Right ventricle myocardium superior (tissue), 1 donor: ENCODE measurements at regions of chr1 and their contacts with region 1.

Region 1: DNA sequence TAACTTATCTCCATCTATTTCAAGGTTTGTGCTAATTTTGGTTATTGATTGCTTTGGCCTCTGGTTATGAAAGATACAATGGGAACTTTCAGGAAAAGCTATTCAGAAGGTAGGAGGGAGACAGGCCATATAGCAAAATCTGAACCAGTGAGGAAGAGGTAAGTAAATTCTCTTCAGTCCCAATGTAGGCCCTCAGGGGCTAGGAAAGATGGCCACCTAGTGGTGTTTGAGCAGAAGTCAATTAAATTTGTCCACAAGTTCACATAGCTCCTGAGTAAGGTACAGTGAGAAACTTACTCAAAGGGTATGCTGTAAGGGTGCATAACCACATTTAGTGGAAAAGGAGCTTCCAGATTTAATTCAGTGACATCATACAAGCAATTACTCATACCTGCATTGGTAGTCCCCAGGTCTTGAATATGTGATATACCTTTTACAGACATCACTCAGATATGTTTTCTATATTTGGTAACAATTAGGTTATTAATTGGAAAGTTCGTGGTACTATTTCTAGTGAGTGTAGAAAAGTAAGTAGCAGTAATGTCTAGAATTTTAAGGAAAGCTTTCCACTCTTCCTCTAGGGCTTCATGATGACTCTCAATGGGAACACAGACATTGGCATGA is 21.4 kb upstream of the FMO1 start:
- DNase-seq: no peak
- ATAC-seq: peak; percentile 84

Region 2: GRCh38 chr1:170967042-170967910 is 259.6 kb before region 1 on chr1:
- intact Hi-C with region 1: loop called (anchors 2 kb)
- DNase-seq: no peak
- ATAC-seq: peak; percentile 80

Region 3: DNA sequence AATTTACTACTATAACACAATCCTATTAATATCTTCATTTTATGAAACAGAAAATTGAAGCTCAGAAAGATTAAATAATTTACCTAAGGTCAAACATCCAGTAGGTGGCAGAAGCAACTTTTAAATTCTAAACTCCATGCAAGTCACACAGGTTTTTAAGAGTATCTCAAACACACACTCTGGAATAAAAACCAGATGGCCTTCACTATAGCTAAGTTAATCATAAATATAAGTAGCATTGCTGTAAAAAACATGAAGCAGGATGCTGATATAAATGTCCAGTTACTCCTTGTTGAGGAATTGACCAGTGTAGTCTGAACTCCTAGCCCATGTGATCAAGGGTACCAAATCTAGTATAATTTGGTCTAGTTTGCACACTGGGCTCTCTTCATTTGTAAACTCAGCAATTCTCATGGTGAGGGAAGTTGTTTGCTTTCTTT is 145.5 kb before region 1 on chr1:
- intact Hi-C with region 1: loop called (anchors 5 kb)
- DNase-seq: no peak
- ATAC-seq: peak; percentile 64